Heart right ventricle (tissue), 16 donors: ENCODE measurements at regions of chr11 and their contacts with region 1.

Region 1: GRCh38 chr11:76604626-76605241 is 65.8 kb downstream of the LRRC32 start:
- DNase-seq: peak; percentile 68 to 84
- ATAC-seq: peak; percentile 61 to 82 (median 76)
- H3K4me3 ChIP-seq: no peak overlapping the region
- H3K27ac ChIP-seq: peak overlapping the region in 9 of 10 donors; percentile 6 to 88 (median 73)
- H3K4me1 ChIP-seq: peaks cover 26 to 59% (median 49%) of the 10 kb centered on the region in 9 donors
- H3K27me3 ChIP-seq: no peaks in the 10 kb centered on the region
- CTCF ChIP-seq: no peak

Region 2: DNA sequence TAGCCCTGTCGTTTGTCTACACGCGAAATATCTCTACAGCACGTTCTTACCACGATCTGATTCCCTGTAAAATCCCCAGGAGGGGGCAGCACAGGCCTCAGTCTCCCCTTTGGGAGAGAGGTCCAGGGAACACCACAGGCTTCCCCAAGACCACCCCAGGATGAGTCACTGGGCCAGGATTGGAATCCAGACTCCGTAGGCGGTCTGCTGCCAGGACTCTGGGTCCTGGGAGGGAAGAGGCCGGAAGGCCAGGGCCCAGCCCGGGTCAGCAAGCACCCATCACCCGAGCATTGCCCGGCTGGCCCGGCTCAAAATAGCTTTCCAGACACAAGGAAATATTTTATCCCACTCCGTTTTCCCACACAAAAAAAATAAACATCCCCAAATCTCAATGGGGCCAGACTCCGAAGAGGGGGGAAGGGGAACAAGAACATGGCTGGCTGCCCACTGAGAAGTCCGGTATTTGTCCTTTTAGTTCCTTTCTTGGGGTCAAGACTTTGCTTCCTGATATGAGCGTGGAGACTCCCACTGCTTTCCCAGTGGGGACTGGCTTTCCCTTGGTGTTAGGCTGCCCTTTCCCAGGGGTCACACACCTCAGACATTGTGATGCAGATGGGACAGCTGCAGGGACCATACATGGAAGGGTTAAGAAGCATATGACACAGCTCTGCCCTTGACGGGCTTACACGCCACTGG is 25.5 kb before region 1 on chr11:
- intact Hi-C with region 1: loop called in 1 of 10 experiments (anchors 5 kb)
- DNase-seq: peak; percentile 75 to 81
- ATAC-seq: peak; percentile 59 to 81 (median 74)
- H3K4me3 ChIP-seq: peak overlapping the region in 3 of 10 donors; percentile 16 to 28 (median 28)
- H3K27ac ChIP-seq: peak overlapping the region; percentile 64 to 94 (median 86)
- H3K4me1 ChIP-seq: peaks cover 13 to 44% (median 38%) of the 10 kb centered on the region in 9 donors
- H3K27me3 ChIP-seq: no peaks in the 10 kb centered on the region
- CTCF ChIP-seq: peak in 8 of 9 donors; percentile 19 to 68 (median 50)